IMR-90 (cell line): ENCODE measurements at regions of chr1 and their contacts with region 1.

Region 1: GRCh38 chr1:61757945-61758344 is 15.7 kb downstream of the PATJ start:
- DNase-seq: peak; percentile 63
- ATAC-seq: peak; percentile 59
- H3K4me3 ChIP-seq: no peak overlapping the region
- H3K27ac ChIP-seq: no peak overlapping the region
- H3K4me1 ChIP-seq: no peaks in the 10 kb centered on the region
- H3K27me3 ChIP-seq: no peaks in the 10 kb centered on the region
- CTCF ChIP-seq: no peak
- POLR2A ChIP-seq: no peak
- RAD21 ChIP-seq: no peak

Region 2: DNA sequence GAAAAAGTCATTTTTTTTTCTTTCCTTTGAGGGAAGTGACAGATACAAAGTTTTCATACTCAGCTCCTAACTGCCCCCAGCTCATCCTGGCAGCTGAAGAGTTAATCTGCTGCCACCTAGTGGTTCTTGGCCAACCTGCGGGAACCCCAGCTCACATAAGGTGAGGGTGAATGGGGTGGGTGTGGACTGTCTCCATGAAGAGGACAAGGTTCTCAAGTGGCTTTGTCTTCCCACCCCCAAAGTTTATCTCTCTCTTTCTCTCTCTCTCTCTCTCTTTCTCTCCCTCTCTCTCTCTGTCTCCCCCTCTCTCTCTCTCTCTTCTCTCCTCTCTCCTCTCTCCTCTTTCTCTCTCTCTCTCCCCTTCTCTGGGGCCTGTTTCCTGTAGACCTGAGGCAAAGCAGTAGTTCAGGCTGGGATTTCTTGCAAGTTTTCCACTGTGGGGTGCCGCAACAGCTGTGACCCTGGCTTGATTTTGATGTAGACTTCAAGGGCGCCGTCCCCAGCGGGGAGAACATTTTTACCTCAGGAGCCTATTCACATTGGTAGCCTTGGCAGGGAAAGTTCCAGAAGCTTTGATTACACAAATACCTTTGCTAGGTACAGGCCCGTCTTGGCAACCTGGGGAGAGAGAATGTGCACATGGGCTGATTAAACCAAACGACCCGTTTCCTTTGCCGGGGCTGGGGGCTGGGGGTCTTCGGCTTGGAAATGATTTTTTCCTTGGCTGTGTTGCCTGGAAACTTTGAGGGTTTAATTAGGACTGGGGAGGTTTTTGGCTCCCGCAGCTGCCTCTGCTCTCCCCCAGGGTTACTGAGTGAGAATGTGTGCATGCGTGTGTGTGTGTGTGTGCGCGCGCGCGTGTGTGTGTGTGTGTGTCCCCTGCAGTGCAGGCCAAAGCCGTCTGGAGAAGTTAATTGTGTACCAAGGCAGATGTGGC is 168.9 kb before region 1 on chr1:
- CTCF ChIA-PET with region 1: no interaction called
- POLR2A ChIA-PET with region 1: no interaction called
- dilution Hi-C with region 1: no loop called
- in situ Hi-C with region 1: no loop called
- intact Hi-C with region 1: no loop called
- DNase-seq: peak; percentile 36
- ATAC-seq: peak; percentile 85
- H3K4me3 ChIP-seq: no peak overlapping the region
- H3K27ac ChIP-seq: no peak overlapping the region
- H3K4me1 ChIP-seq: no peaks in the 10 kb centered on the region
- H3K27me3 ChIP-seq: no peaks in the 10 kb centered on the region; the same call in 1 of the 2 replicates
- CTCF ChIP-seq: peak; percentile 63
- POLR2A ChIP-seq: no peak
- RAD21 ChIP-seq: peak; percentile 63

Region 3: GRCh38 chr1:61680500-61680899 is 77.4 kb before region 1 on chr1:
- CTCF ChIA-PET with region 1: no interaction called
- POLR2A ChIA-PET with region 1: interaction called, 13 read pairs
- dilution Hi-C with region 1: no loop called
- in situ Hi-C with region 1: no loop called
- intact Hi-C with region 1: no loop called
- DNase-seq: no peak
- ATAC-seq: no peak
- H3K4me3 ChIP-seq: no peak overlapping the region
- H3K27ac ChIP-seq: no peak overlapping the region
- H3K4me1 ChIP-seq: no peaks in the 10 kb centered on the region
- H3K27me3 ChIP-seq: no peaks in the 10 kb centered on the region
- CTCF ChIP-seq: no peak
- POLR2A ChIP-seq: no peak
- RAD21 ChIP-seq: no peak